ENCODE measurements at regions of chr4 and their contacts with region 1.

Region 1: GRCh38 chr4:166088576-166088975 is 215.5 kb downstream of the TLL1 start:
- DNase-seq: peak in 1 of 2 donors; percentile 20
- H3K4me3 ChIP-seq: no peak overlapping the region
- H3K27ac ChIP-seq: no peak overlapping the region
- H3K4me1 ChIP-seq: no peaks in the 10 kb centered on the region
- H3K27me3 ChIP-seq: no peaks in the 10 kb centered on the region
- CTCF ChIP-seq: no peak
- EP300 ChIP-seq: no peak
- POLR2A ChIP-seq: no peak

Region 2: GRCh38 chr4:165537028-165537648 is 551.4 kb before region 1 on chr4:
- intact Hi-C with region 1: loop called (anchors 5 kb)
- DNase-seq: peak in 1 of 2 donors; percentile 80
- H3K4me3 ChIP-seq: no peak overlapping the region
- H3K27ac ChIP-seq: no peak overlapping the region
- H3K4me1 ChIP-seq: no peaks in the 10 kb centered on the region
- H3K27me3 ChIP-seq: no peaks in the 10 kb centered on the region
- CTCF ChIP-seq: peak in 5 of 7 experiments; percentile 38 to 73 (median 66)
- EP300 ChIP-seq: no peak
- POLR2A ChIP-seq: no peak

Region 3: DNA sequence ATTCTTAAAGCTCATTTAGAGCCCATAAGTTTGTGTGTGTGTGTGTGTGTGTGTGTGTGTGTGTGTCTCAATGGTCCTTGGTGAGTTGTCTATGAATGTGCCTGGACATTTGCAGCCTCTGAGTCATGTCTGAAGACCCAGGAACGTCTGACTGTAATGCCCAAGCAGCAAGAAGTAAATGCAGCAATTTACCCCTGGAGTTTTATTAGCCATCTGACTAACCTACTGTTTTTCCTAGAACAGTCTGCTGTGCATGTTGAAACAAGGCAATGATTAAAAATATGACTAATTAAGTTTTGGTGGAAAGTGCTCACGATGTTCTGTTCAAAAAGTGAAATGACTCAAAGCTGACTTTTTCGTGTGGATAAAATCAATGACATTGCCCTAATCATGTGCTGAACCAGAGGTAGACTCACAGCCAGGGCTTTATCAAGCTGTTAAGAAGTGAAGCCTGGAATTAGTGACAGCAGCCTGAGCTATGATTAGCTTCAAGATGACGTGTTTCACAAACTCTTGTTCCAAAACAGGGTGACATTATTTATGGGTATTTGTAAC is 508.1 kb before region 1 on chr4:
- intact Hi-C with region 1: no loop called
- DNase-seq: no peak
- H3K4me3 ChIP-seq: no peak overlapping the region
- H3K27ac ChIP-seq: no peak overlapping the region
- H3K4me1 ChIP-seq: no peaks in the 10 kb centered on the region
- H3K27me3 ChIP-seq: no peaks in the 10 kb centered on the region
- CTCF ChIP-seq: no peak
- EP300 ChIP-seq: no peak
- POLR2A ChIP-seq: no peak

Region 4: DNA sequence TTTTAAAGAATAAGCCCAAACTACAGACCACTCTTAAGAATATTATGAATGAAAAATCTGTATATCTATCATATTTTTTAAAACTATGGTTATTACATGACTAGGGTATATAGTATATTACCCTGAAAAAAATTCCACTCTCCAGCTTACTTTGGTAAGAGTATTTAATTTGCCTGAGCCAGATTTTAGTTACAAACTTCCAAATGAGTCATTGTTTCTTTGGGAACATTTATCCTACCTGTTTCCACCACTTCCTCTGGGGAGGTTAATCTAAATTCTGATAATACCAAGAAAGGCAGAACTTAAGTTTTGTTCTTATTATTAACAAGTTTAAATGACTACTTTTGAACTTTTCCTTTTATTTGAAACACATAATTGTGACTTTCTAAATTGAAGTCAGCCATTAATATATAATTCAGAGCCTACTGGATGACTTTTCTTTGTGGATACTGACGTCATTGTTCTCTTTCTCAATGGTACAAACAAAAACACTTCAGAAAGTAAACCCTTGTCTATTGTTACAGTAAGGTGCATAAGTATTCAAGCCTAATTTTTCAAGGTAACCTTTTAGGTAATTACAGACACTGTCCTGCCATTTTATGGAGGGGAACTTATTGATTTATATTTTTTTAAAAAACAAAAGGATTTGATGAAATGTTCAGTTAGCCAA is 351.1 kb before region 1 on chr4:
- intact Hi-C with region 1: no loop called
- DNase-seq: no peak
- H3K4me3 ChIP-seq: no peak overlapping the region
- H3K27ac ChIP-seq: no peak overlapping the region
- H3K4me1 ChIP-seq: no peaks in the 10 kb centered on the region
- H3K27me3 ChIP-seq: no peaks in the 10 kb centered on the region
- CTCF ChIP-seq: no peak
- EP300 ChIP-seq: no peak
- POLR2A ChIP-seq: no peak

Region 5: DNA sequence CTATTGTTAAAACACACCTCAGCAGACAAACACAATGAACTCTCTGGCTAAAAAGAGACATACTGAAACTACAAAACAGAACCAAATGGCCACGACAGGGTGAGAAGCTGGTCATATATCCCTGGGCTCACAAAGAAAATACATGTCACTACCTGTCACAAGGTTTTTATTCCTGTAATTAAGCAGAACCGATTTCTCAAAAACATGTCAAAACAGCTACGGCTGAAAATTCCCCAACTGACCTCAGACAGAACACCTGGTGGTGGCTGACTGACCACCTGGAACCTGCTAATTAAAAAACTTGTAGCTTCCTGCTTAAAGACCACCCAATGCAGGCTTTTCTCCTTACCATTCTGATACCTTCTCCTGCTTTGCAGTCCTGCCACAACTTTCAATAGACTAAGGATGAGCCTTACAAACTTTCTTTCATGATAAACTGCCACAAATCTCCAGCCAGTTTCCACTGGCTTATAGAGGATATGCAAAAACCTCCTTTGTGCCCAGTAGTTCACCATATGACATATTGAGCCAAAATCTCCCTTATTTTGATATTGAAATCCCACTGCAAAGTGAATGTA is 573.8 kb after region 1 on chr4:
- intact Hi-C with region 1: no loop called
- DNase-seq: no peak
- H3K4me3 ChIP-seq: no peak overlapping the region
- H3K27ac ChIP-seq: no peak overlapping the region
- H3K4me1 ChIP-seq: no peaks in the 10 kb centered on the region
- H3K27me3 ChIP-seq: no peaks in the 10 kb centered on the region
- CTCF ChIP-seq: no peak
- EP300 ChIP-seq: no peak
- POLR2A ChIP-seq: no peak